Activated naive CD4-positive, alpha-beta T cell treated with anti-CD3 and anti-CD28 coated beads, Interleukin-2, amount 10 ng/mL, durations not matched to agents 7 days and 5 days (primary cell): ENCODE measurements at regions of chr1 and their contacts with region 1.

Region 1: DNA sequence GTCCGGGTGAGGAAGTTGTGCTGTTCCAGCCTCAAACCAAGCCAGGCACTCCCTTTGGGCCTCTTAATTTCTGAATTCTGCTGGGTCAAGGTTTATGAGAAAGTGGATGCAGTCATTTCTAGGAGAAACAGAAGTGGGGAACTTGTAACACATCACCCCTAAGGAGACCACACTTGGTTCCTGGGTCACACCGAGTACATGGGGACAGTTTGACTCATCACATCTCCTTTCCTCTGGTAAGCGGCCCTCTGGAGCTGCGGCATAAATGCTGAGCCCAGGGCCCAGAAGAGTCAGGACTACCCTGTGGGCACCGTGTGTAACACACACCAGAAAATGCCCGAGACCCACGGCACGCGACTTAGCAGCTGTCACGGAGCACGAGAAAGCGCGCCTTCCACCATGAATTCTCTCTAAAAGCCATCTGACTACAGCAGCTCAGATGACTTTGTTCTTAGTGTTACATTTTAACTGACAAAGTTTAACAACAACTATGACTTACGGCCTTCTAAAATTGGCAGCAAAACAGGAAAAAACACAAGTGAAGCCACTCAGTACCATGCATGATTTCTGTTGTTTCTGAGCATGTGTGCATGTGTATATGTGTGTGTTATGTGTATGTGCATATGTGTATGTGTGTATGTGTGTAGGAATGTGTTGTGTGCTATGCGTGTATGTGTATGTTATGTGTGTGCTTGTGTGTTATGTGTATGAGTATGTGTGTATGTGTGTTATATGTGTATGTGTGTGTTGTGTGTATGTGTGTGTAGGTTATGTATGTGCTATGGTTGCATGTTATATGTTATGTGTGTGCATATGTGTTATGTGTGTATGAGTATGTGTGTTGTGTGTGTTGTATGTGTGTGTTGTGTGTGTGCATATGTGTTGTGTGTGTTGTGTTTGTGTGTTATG is 50.8 kb downstream of the TOMM20 start:
- DNase-seq: no peak
- H3K4me3 Mint-ChIP-seq: no peak overlapping the region
- H3K27ac Mint-ChIP-seq: no peak overlapping the region
- H3K4me1 Mint-ChIP-seq: peaks cover 31% of the 10 kb centered on the region
- H3K27me3 Mint-ChIP-seq: no peaks in the 10 kb centered on the region

Region 2: GRCh38 chr1:234499119-234499942 is 578.5 kb before region 1 on chr1:
- CTCF ChIA-PET with region 1: interaction called, 50 read pairs
- DNase-seq: peak; percentile 88
- H3K4me3 Mint-ChIP-seq: no peak overlapping the region
- H3K27ac Mint-ChIP-seq: peak overlapping the region; percentile 61
- H3K4me1 Mint-ChIP-seq: peaks cover 42% of the 10 kb centered on the region
- H3K27me3 Mint-ChIP-seq: peaks cover 13% of the 10 kb centered on the region

Region 3: DNA sequence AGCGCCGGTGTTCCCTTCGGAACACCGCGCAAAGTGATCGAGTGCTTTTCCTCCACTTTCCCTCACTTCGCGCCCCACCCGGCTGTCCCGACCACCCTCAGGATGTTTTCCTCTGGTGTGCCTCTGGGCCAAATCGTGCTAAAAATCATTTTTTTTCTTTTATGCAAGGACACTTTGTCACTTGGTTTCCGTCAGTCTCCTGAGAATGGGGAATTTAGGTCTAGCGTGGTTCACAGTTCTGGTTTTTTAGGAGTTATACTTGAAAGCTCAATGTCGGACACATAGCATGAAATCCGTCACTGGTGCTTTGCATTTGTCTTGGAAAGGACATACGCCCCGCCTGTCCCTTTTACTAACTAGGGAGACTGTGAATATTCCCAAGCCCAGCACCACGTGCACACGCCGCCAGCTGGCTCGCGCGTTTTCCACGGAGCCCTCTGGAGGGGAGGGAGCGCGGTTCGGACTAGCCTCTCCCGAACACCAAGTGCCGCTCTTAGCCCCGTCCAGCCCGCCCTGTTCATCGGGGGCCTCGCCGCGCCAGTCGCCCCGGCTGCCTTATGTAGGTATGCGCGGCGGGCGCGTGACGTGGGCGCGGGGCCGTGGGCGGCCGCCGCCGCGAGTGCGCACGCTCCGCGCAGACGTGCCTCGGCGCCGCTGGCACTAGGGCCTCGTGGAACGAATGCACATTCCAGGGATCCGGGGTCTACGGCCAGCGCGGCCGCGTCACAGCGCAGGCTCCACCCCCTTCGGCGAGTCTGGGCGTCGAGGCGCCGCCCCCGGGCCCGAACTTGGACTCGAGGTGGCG is 467.3 kb before region 1 on chr1:
- CTCF ChIA-PET with region 1: interaction called, 20 read pairs
- DNase-seq: peak; percentile 93
- H3K4me3 Mint-ChIP-seq: peak overlapping the region; percentile 87
- H3K27ac Mint-ChIP-seq: peak overlapping the region; percentile 100
- H3K4me1 Mint-ChIP-seq: peaks cover 51% of the 10 kb centered on the region
- H3K27me3 Mint-ChIP-seq: no peaks in the 10 kb centered on the region

Region 4: DNA sequence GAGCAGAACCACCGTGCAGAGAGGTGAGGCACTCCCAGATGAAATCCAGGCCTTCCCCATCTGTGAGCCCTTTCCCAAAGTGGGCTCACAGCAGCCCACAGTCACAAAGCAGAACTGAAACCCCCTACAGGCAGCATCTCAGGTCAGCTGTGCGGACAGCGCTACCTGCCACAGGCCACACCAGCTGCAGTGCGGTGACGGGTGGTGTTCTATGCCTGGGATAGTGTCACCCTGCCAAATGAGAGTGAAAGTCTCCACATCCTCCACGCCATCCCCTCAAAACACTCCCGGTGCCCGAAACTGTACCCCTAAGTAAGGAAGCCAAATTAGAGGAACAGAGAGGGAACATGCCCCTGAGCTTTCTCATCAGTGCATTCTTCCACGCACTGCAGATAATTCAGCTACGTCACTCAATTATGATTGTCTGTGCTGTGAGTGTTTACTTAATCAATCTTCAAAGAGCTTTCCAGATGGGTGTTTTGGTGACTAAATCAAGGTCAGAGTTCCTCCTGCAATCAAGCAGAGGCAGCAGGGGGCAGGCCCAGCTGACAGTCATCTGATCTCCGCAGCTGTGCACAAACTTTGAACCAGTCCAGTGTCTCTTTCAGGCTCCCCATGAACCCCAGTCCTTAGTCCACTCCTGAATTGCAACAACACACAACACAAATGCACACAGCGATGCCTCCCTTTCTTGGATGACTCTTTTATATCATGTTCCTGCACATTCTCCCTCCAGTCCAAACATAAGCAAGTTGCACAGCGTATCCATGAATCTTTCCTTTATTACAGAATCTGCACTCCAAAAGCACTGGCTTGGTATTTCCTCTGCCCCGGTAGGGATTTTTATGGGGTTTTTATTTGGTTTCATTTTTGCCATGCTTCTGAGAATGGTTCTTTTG is 99.2 kb before region 1 on chr1:
- CTCF ChIA-PET with region 1: interaction called, 14 read pairs
- DNase-seq: peak; percentile 52
- H3K4me3 Mint-ChIP-seq: peak overlapping the region; percentile 4
- H3K27ac Mint-ChIP-seq: peak overlapping the region; percentile 79
- H3K4me1 Mint-ChIP-seq: peaks cover 55% of the 10 kb centered on the region
- H3K27me3 Mint-ChIP-seq: no peaks in the 10 kb centered on the region

Region 5: DNA sequence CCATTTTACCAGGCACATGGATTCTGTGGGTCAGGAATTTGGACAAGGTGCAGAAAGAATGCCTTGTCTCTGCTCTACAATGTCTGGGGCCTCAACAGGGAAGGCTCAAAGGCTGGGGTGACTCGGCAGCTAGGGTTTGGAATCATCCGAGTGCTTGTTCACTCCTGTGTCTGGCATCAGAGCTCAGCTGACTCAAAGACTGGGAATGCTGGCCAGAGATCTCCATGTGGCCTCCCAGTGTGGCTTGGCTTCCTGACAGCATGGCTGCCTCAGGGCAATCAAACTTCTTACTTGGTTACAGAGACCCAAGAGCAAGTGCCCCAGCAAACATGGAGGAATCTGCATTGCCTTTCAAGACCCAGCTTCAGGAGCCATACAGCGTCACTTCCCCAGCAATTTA is 59.7 kb before region 1 on chr1:
- CTCF ChIA-PET with region 1: interaction called, 30 read pairs
- DNase-seq: no peak
- H3K4me3 Mint-ChIP-seq: no peak overlapping the region
- H3K27ac Mint-ChIP-seq: no peak overlapping the region
- H3K4me1 Mint-ChIP-seq: peaks cover 52% of the 10 kb centered on the region
- H3K27me3 Mint-ChIP-seq: no peaks in the 10 kb centered on the region